ENCODE measurements at regions of chr1 and their contacts with region 1.

Region 1: DNA sequence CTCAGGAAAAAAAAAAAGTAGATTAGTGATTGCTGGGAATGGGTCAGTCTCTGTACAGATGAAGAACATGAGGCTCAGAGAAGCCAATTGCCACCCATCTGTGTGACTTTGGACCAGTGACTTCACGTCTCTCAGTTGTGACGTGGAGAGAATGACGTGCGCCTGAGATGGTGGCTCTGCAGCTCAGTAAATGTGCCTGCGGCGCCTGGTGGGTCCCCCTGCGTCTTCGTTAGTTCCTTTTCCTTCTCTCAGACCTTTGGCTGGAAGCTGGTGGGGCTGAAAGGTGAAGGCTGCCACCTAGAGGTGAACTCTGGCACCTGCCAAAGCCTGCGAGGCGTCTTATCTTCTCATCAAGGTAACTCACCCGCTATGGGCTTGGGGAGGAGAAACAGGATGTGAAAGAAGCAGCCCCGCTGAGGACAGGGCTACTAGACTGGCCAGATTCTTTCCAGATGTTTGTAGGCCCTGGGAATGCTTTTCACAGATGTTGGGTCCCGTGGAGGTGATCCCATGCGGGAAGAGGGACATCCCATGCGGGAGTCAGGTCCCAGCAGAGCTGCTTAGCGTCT is 8.7 kb upstream of the E2F2 start:
- DNase-seq: peak; percentile 98
- ATAC-seq: peak; percentile 91
- H3K4me3 ChIP-seq: peak overlapping the region in 1 of 5 experiments; percentile 5
- H3K4me3 Mint-ChIP-seq: peak overlapping the region; percentile 73
- H3K27ac ChIP-seq: no peak overlapping the region
- H3K27ac Mint-ChIP-seq: peak overlapping the region; percentile 79
- H3K4me1 ChIP-seq: peaks cover 18 to 26% of the 10 kb centered on the region in 2 donors
- H3K4me1 Mint-ChIP-seq: peaks cover 29% of the 10 kb centered on the region
- H3K27me3 ChIP-seq: no peaks in the 10 kb centered on the region
- H3K27me3 Mint-ChIP-seq: no peaks in the 10 kb centered on the region
- CTCF ChIP-seq: peak; percentile 91

Region 2: GRCh38 chr1:22790232-22791008 is 749.4 kb before region 1 on chr1:
- CTCF ChIA-PET with region 1: no interaction called
- POLR2A ChIA-PET with region 1: no interaction called
- intact Hi-C with region 1: no loop called
- DNase-seq: no peak
- ATAC-seq: no peak
- H3K4me3 ChIP-seq: no peak overlapping the region
- H3K4me3 Mint-ChIP-seq: no peak overlapping the region
- H3K27ac ChIP-seq: no peak overlapping the region
- H3K27ac Mint-ChIP-seq: no peak overlapping the region
- H3K4me1 ChIP-seq: no peaks in the 10 kb centered on the region
- H3K4me1 Mint-ChIP-seq: no peaks in the 10 kb centered on the region
- H3K27me3 ChIP-seq: no peaks in the 10 kb centered on the region
- H3K27me3 Mint-ChIP-seq: peaks cover 4% of the 10 kb centered on the region
- CTCF ChIP-seq: no peak

Region 3: DNA sequence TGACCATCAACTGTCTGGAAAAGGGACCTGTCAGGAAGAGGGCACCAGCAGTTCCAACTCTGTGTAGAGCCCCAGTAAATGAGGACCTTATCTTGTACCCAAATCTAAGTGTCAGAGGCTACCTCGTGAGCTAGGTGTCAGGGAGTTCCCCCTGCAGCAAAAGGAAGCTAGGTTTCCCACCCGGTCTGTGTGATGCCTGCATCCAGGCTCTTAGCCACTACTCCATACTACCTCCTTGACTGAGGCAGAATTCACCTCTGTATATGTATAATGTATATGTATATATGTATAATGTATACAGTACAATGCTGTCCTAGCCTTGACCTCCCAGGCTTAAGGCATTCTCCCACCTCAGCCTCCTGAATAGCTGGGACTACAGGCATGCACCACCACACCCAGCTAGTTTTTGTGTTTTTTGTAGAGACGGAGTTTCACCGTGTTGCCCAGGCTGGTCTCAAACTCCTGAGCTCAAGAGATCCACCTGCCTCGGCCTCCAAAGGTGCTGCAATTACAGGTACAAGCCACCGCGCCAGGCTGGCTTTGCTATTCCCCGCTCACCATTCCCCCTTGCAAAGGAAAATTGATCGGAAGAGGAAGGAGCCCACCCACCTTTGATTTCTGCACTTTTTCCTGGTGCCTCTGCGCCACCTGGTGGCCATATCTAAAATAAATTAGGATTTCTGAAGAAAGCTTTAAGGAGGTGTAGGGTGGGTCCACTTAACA is 355.4 kb before region 1 on chr1:
- CTCF ChIA-PET with region 1: no interaction called
- POLR2A ChIA-PET with region 1: no interaction called
- intact Hi-C with region 1: no loop called
- DNase-seq: peak; percentile 76
- ATAC-seq: no peak
- H3K4me3 ChIP-seq: peak overlapping the region in 3 of 5 experiments; percentile 13 to 59 (median 39)
- H3K4me3 Mint-ChIP-seq: peak overlapping the region; percentile 72
- H3K27ac ChIP-seq: no peak overlapping the region
- H3K27ac Mint-ChIP-seq: no peak overlapping the region
- H3K4me1 ChIP-seq: peaks cover 3 to 8% of the 10 kb centered on the region in 2 donors
- H3K4me1 Mint-ChIP-seq: peaks cover 9% of the 10 kb centered on the region
- H3K27me3 ChIP-seq: peaks cover 0 to 2% (median 0%) of the 10 kb centered on the region in 4 experiments
- H3K27me3 Mint-ChIP-seq: no peaks in the 10 kb centered on the region
- CTCF ChIP-seq: peak; percentile 83

Region 4: GRCh38 chr1:23452011-23452411 is 87.8 kb before region 1 on chr1:
- CTCF ChIA-PET with region 1: no interaction called
- POLR2A ChIA-PET with region 1: no interaction called
- intact Hi-C with region 1: no loop called
- DNase-seq: no peak
- ATAC-seq: no peak
- H3K4me3 ChIP-seq: no peak overlapping the region
- H3K4me3 Mint-ChIP-seq: no peak overlapping the region
- H3K27ac ChIP-seq: no peak overlapping the region
- H3K27ac Mint-ChIP-seq: no peak overlapping the region
- H3K4me1 ChIP-seq: no peaks in the 10 kb centered on the region
- H3K4me1 Mint-ChIP-seq: no peaks in the 10 kb centered on the region
- H3K27me3 ChIP-seq: peaks cover 0 to 4% (median 0%) of the 10 kb centered on the region in 4 experiments
- H3K27me3 Mint-ChIP-seq: peaks cover 16% of the 10 kb centered on the region
- CTCF ChIP-seq: no peak

Region 5: DNA sequence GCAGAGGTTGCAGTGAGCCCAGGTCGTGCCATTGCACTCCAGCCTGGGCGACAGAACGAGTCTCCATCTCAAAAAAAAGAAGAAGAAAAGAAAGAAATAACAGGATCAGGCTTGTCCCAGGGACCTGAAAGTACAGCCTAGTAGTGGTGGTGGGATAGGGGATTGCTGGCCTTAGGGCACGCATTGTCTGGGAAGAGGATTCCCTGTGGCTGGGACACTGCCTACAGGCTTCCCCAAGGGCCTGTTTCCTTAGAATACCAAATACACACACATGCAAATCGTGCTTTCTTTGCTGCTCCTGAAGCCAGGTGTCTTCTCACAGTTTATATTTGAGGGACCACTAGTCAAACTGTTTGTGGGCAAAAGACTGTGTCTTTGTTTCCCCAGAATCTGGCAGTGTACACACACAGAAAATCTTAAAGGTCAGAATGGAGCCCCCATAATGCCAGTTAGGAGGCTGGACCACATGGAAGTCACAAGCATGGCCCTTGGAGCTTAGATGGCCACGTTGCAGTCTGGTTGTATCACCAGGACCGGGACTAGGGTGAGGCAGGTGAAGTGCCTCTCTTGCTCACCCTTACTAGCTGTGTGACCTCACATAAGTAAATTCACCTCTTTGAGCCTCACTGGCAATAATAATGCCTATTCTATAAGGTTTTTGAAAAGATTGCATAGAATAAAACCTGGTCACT is 43.1 kb before region 1 on chr1:
- CTCF ChIA-PET with region 1: interaction called, 446 read pairs
- POLR2A ChIA-PET with region 1: interaction called, 40 read pairs
- intact Hi-C with region 1: loop called (anchors 1 kb)
- DNase-seq: no peak
- ATAC-seq: no peak
- H3K4me3 ChIP-seq: no peak overlapping the region
- H3K4me3 Mint-ChIP-seq: no peak overlapping the region
- H3K27ac ChIP-seq: no peak overlapping the region
- H3K27ac Mint-ChIP-seq: no peak overlapping the region
- H3K4me1 ChIP-seq: peaks cover 3 to 13% of the 10 kb centered on the region in 2 donors
- H3K4me1 Mint-ChIP-seq: peaks cover 17% of the 10 kb centered on the region
- H3K27me3 ChIP-seq: peaks cover 0 to 3% (median 0%) of the 10 kb centered on the region in 4 experiments
- H3K27me3 Mint-ChIP-seq: peaks cover 1% of the 10 kb centered on the region
- CTCF ChIP-seq: no peak

Region 6: DNA sequence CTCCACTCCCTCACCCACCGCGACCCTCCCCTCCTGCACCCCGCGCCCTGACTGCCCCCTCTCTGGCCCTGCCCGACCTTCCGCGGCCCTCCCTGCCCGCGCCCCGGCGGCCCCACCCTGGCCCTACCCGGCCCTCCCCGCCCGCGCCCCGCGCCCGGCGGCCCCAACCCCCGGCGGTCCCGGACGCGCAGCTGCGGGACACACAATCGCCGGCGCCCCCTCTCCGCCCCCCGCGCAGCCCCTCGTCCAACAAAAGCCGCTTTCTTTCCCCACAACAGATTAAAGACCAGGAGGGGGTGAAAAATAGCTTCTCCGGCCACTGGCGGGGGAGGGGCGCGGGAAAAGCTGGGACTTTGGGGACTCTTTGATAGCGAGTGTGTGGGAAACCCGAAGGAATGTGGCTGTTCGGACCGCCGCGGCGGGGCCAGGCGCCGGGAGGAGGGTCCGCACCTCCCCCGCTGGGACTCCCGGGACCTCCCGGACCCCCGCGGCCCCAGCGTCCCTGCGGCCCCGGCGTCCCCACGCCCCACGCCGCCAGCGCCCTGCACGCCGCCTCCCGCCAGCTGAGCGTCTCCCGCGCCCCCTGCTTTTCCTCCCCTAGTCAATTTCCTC is 28.3 kb after region 1 on chr1:
- CTCF ChIA-PET with region 1: interaction called, 74 read pairs
- POLR2A ChIA-PET with region 1: no interaction called
- intact Hi-C with region 1: no loop called
- DNase-seq: no peak
- ATAC-seq: peak; percentile 28
- H3K4me3 ChIP-seq: peak overlapping the region; percentile 30 to 88 (median 69)
- H3K4me3 Mint-ChIP-seq: peak overlapping the region; percentile 93
- H3K27ac ChIP-seq: peak overlapping the region; percentile 49 to 69
- H3K27ac Mint-ChIP-seq: peak overlapping the region; percentile 95
- H3K4me1 ChIP-seq: peaks cover 37 to 40% of the 10 kb centered on the region in 2 donors
- H3K4me1 Mint-ChIP-seq: peaks cover 54% of the 10 kb centered on the region
- H3K27me3 ChIP-seq: no peaks in the 10 kb centered on the region
- H3K27me3 Mint-ChIP-seq: no peaks in the 10 kb centered on the region
- CTCF ChIP-seq: no peak

Region 7: GRCh38 chr1:23607947-23608346 is 68.2 kb after region 1 on chr1:
- CTCF ChIA-PET with region 1: interaction called, 16 read pairs
- POLR2A ChIA-PET with region 1: interaction called, 4 read pairs
- intact Hi-C with region 1: no loop called
- DNase-seq: no peak
- ATAC-seq: no peak
- H3K4me3 ChIP-seq: no peak overlapping the region
- H3K4me3 Mint-ChIP-seq: no peak overlapping the region
- H3K27ac ChIP-seq: peak overlapping the region in 1 of 2 donors; percentile 7
- H3K27ac Mint-ChIP-seq: peak overlapping the region; percentile 81
- H3K4me1 ChIP-seq: peaks cover 44 to 53% of the 10 kb centered on the region in 2 donors
- H3K4me1 Mint-ChIP-seq: peaks cover 59% of the 10 kb centered on the region
- H3K27me3 ChIP-seq: no peaks in the 10 kb centered on the region
- H3K27me3 Mint-ChIP-seq: no peaks in the 10 kb centered on the region
- CTCF ChIP-seq: no peak

Region 8: DNA sequence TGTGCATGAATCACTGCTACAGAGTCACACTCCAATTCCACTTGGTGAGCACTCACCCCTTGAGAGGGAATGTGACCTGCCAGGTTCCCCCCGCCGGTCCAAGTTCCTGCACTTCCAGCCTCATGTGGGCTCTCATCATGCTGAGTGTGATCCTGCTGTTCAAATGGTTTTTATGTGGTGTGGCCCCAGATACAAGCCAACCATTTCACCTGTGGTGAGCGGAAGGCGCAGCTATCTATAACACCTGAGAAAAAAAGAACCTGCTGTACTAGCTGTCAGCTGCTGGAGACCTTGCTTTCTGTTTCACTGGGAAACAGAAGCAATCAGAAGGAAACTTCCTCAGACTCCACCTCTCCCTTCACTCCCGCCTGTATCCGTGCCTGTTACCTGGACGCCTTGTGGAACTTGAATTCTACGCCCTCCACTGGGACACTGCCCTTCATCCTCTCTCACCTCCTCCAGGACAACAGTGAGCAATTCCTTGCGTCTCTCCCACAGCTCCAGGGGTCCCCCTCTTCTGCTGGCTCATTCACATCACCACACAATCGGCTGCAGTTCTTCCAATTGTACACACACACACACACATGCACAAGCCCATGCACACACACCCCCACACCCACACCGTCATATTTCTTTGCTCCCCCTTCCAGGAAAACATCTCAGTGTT is 87.4 kb after region 1 on chr1:
- CTCF ChIA-PET with region 1: interaction called, 1,420 read pairs
- POLR2A ChIA-PET with region 1: interaction called, 3 read pairs
- intact Hi-C with region 1: no loop called
- DNase-seq: peak; percentile 72
- ATAC-seq: peak; percentile 38
- H3K4me3 ChIP-seq: peak overlapping the region in 4 of 5 experiments; percentile 15 to 46 (median 25)
- H3K4me3 Mint-ChIP-seq: peak overlapping the region; percentile 76
- H3K27ac ChIP-seq: peak overlapping the region; percentile 62 to 65
- H3K27ac Mint-ChIP-seq: peak overlapping the region; percentile 90
- H3K4me1 ChIP-seq: peaks cover 73 to 88% of the 10 kb centered on the region in 2 donors
- H3K4me1 Mint-ChIP-seq: peaks cover 73% of the 10 kb centered on the region
- H3K27me3 ChIP-seq: no peaks in the 10 kb centered on the region
- H3K27me3 Mint-ChIP-seq: no peaks in the 10 kb centered on the region
- CTCF ChIP-seq: no peak

Region 9: GRCh38 chr1:23691499-23692307 is 151.9 kb after region 1 on chr1 and contains the start of gene RPL11:
- CTCF ChIA-PET with region 1: interaction called, 8 read pairs
- POLR2A ChIA-PET with region 1: no interaction called
- intact Hi-C with region 1: loop called (anchors 1 kb)
- DNase-seq: peak; percentile 92
- ATAC-seq: peak; percentile 100
- H3K4me3 ChIP-seq: peak within 1 kb of the TSS; percentile 76 to 99 (median 77)
- H3K4me3 Mint-ChIP-seq: peak within 1 kb of the TSS; percentile 97
- H3K27ac ChIP-seq: peak within 1 kb of the TSS; percentile 79 to 84
- H3K27ac Mint-ChIP-seq: peak within 1 kb of the TSS; percentile 94
- H3K4me1 ChIP-seq: peaks cover 16 to 22% of the 10 kb centered on the region in 2 donors
- H3K4me1 Mint-ChIP-seq: peaks cover 48% of the 10 kb centered on the region
- H3K27me3 ChIP-seq: no peaks in the 10 kb centered on the region
- H3K27me3 Mint-ChIP-seq: no peaks in the 10 kb centered on the region
- CTCF ChIP-seq: peak; percentile 79
- total RNA-seq, gene RPL11: 1,439 and 1,539 TPM in 2 replicates

Region 10: GRCh38 chr1:24126018-24126671 is 586.4 kb after region 1 on chr1:
- CTCF ChIA-PET with region 1: no interaction called
- POLR2A ChIA-PET with region 1: no interaction called
- intact Hi-C with region 1: no loop called
- DNase-seq: no peak
- ATAC-seq: no peak
- H3K4me3 ChIP-seq: no peak overlapping the region
- H3K4me3 Mint-ChIP-seq: no peak overlapping the region
- H3K27ac ChIP-seq: no peak overlapping the region
- H3K27ac Mint-ChIP-seq: no peak overlapping the region
- H3K4me1 ChIP-seq: no peaks in the 10 kb centered on the region
- H3K4me1 Mint-ChIP-seq: no peaks in the 10 kb centered on the region
- H3K27me3 ChIP-seq: no peaks in the 10 kb centered on the region
- H3K27me3 Mint-ChIP-seq: peaks cover 9% of the 10 kb centered on the region
- CTCF ChIP-seq: no peak